ENCODE measurements at regions of chr2 and their contacts with region 1.

Region 1: GRCh38 chr2:113977660-113978523 is 88.0 kb downstream of the ACTR3 start:
- DNase-seq: peak; percentile 75
- H3K4me3 ChIP-seq: no peak overlapping the region
- H3K27ac ChIP-seq: no peak overlapping the region
- H3K4me1 ChIP-seq: peaks cover 5% of the 10 kb centered on the region; the same call in 1 of the 2 replicates
- H3K27me3 ChIP-seq: no peaks in the 10 kb centered on the region

Region 2: DNA sequence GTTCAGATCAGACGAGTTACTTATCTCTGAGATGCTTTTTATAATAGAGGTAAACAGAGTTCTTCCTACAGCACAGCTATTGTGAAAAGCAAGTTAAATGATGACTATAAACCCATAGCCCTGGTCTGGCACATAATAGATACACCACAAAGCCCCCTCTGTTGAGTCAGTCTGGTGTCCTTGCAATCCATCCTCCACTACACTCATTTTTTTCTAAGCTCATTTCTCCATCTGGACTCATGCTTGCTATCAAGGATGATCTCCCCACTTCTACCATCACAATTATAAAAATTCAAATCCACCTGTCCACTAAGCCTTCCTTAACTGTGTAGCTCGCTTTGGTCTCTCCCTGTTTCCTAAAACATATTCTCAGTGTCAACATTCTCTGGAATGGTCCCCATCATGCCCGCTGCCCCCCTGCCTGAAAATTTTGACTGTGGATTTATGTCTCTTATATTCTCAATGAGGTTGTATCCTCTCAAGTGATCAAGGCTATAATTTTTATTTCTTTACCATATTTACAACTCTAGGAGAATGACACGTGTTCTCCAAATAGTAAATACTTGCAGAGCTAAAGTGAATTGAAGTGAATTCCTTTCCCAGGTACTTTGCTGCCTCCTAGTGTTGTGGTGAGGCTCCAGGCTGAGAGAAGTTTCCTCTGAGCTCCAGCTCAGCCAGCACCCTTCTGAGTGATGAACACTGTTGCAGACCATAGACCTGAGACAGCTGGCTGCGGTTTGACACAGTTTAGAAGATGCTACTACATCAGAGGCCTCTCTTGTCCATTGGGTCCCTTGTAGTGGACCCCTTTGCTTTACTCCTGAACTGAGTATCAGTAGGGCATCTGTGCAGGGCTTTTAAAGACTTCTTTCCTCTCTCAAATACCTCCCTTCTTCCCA is 573.3 kb after region 1 on chr2:
- in situ Hi-C with region 1: loop called (anchors 10 kb)
- DNase-seq: peak; percentile 72
- H3K4me3 ChIP-seq: no peak overlapping the region
- H3K27ac ChIP-seq: no peak overlapping the region
- H3K4me1 ChIP-seq: no peaks in the 10 kb centered on the region
- H3K27me3 ChIP-seq: no peaks in the 10 kb centered on the region; the same call in 1 of the 2 replicates